ENCODE measurements at regions of chrX and their contacts with region 1.

Region 1: GRCh38 chrX:155056877-155057792 is 13.8 kb downstream of the CMC4 start:
- DNase-seq: peak; percentile 55 to 84 (median 82)
- ATAC-seq: peak; percentile 86 to 91
- H3K4me3 ChIP-seq: no peak overlapping the region
- H3K27ac ChIP-seq: peak overlapping the region; percentile 5
- H3K4me1 ChIP-seq: peaks cover 2% of the 10 kb centered on the region
- H3K27me3 ChIP-seq: no peaks in the 10 kb centered on the region

Region 2: DNA sequence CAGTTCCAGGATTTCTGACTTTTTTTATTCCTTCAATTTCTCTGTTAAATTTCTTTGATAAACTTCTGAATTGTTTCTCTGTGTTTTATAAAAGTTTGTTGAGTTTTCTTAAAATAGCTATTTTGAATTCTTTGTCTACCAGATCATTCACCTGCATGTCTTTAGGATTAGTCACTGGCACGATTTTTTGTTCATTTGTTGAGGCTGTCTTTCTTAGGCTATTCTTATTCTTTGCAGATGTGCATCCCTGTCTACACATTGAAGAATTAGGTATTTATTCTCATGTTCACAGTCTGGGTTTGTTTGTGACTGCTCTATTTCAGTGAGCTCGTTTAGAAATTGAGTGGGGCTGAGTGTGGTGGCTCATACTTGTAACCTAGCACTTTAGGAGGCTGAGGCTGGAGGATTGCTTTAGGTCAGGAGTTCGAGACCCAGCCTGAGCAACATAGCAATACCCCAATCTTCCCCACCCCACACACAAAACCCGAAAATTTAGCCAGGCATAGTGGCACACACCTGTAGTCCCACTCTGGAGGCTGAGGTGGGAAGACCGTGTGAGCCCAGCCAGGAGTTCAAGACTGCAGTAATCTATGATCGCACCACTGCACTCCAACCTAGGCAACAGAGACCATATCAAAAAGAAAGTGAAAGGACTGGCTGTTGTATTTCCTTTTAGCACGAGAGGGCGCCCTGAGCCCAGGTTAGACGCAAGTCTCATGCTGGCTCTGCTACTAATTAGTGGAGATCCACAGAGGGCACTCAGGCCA is 76.6 kb before region 1 on chrX:
- intact Hi-C with region 1: loop called (anchors 5 to 10 kb)
- DNase-seq: peak; percentile 52 to 79 (median 67)
- ATAC-seq: peak; percentile 88
- H3K4me3 ChIP-seq: peak overlapping the region; percentile 37
- H3K27ac ChIP-seq: no peak overlapping the region
- H3K4me1 ChIP-seq: no peaks in the 10 kb centered on the region
- H3K27me3 ChIP-seq: no peaks in the 10 kb centered on the region

Region 3: DNA sequence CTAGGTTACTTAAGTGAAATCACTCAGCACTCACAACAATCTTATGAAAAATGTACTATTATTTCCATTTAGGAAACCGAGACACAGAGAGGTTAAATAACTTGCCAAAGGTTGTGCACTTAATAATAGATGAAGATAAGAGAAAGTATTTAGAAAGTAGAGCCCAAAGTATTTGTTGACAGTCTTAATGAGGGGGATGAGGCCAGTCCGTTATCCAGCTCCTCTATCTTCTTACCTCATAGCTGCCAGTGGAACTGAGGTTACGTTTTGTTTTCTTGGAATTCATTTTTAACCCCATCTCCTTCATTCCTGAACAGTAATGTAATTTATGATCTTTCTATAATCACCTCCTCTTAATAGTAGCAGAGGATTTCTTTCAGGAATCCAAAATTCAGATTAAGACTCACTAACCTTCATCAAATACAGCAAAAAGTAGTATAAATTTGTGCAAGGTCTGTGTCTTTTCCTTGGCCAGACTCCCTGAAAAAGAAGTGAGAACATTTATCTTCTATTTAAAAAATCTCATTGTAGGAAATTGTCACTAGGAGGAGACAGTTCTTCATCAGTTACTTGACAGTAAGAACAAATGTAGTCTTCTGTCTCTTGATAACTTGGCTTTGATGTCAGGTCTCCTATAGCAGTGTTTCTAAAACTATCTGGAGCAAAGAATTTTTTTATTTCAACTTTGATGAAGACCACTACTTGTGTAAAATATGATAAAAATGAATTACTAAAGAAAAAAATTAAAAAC is 70.1 kb before region 1 on chrX:
- intact Hi-C with region 1: loop called (anchors 5 to 10 kb)
- DNase-seq: no peak
- ATAC-seq: no peak
- H3K4me3 ChIP-seq: no peak overlapping the region
- H3K27ac ChIP-seq: no peak overlapping the region
- H3K4me1 ChIP-seq: no peaks in the 10 kb centered on the region
- H3K27me3 ChIP-seq: no peaks in the 10 kb centered on the region

Region 4: DNA sequence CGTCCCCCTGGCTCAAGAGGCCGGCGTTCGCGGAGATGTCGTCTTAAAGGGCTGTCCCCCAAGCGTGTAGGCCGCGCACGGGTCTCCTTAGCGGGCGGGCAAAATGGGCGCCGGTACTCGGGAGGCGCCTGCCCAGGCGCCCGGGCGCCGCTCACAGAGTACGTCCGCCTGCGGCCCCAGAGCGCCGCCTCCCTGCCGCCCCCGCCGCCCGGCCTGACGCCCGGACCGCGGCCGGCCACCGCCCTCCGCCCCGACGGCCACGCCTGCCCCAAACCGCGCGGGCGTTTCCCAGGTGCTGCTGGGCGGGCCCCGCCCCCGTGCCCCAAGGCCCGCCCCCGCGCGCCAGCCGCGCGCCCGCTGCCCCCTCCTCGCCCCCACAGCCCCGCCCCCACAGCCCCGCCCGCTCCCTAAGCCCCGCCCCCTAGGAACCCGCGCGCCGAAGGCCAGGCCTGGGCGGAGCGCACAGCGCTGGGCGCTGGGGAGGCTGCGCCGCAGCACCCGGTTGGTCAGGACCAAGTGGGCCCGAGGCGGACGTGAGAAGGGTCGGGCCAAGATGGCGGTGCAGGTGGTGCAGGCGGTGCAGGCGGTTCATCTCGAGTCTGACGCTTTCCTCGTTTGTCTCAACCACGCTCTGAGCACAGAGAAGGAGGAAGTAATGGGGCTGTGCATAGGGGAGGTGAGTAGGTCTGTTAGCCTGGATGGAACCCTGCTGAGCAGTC is 14.0 kb after region 1 on chrX and contains the starts of genes BRCC3, CMC4 and MTCP1:
- intact Hi-C with region 1: no loop called
- DNase-seq: peak; percentile 81 to 93 (median 92)
- ATAC-seq: peak; percentile 97 to 98
- H3K4me3 ChIP-seq: peak within 1 kb of the TSS; percentile 80
- H3K27ac ChIP-seq: peak within 1 kb of the TSS; percentile 98
- H3K4me1 ChIP-seq: no peaks in the 10 kb centered on the region
- H3K27me3 ChIP-seq: no peaks in the 10 kb centered on the region
- total RNA-seq, gene BRCC3: 11.7 to 15.0 (median 13.7) TPM
- total RNA-seq, gene CMC4: 18.8 to 24.0 (median 21.0) TPM
- total RNA-seq, gene MTCP1: 46.1 to 61.0 (median 57.6) TPM

Region 5: DNA sequence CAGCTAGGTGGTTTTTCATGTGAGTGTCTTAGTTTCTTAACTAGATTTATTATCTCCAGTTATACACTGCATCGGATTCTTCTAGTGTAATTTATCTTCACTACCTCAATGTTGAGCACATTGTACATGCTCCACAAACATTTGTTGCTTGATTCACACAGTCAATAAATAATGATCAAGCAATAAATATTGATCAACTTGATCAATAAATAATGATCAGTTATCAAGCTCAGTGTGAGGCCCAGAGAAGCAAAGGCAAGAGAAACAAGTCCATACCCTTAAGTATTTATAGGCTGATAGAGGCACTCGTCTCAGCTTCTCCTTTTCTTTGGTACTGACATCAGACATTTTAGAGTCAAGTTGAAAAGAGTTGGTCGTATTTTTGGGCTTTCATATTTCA is 154.1 kb after region 1 on chrX:
- intact Hi-C with region 1: no loop called
- DNase-seq: no peak
- ATAC-seq: no peak
- H3K4me3 ChIP-seq: no peak overlapping the region
- H3K27ac ChIP-seq: no peak overlapping the region
- H3K4me1 ChIP-seq: no peaks in the 10 kb centered on the region
- H3K27me3 ChIP-seq: no peaks in the 10 kb centered on the region

Measured in right cardiac atrium (tissue), 5 donors.